BJ (cell line): ENCODE measurements at regions of chr1 and their contacts with region 1.

Region 1: DNA sequence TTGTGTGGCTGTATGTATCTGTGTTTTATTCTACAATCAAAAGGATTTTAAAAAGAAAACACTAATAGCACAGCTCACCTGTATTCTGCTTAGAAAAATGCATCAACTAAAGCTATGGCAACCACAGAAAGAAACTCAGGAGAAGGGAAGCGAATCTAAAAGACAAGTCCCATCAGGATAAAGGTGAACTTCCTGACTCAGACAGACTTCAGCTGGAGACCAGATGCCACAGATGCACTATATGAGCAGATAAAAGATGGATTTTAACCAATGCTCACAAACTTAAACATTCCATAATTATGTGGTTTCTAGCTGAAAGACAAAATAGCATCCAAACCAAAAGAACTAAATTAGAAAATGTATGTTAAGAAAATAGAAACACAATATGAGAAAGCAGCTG is 231.0 kb downstream of the RERE start:
- DNase-seq: no peak
- H3K4me3 ChIP-seq: no peak overlapping the region
- H3K27me3 ChIP-seq: no peaks in the 10 kb centered on the region
- CTCF ChIP-seq: no peak

Region 2: DNA sequence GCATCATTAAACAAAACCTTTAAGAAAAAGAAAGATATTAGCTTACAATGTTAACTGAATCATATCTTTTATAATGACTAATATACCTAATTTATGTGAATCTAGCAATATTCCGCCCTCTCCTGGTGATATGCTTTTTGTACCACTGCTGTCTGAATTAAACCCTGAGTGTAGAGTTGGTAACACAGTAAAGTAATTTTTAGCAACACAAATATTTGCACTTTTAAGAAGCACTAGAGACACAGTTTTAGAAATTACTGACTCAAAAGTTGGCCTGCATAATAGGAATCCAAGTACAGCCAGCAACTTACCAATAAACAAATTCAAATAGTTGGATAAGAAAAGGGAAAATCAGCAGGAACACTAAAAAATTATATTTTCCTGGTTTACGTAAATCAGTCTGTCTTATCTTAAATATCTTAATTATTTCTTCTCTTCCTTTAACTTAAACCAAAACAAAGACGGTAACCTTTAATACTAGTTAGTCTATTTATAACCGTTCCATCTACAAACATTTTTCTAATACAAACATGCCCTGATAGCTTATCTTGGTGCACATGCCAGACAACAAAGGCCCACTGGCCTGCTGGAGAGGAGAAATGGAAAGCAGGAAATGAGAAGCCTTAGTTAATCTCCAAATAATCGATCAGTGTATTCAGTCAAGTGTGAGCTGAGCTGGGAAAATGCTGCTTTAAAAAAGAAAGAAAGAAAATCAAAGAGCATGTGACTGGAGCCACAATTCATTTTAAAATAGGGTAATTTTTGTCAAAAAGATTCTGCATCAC is 15.0 kb before region 1 on chr1:
- CTCF ChIA-PET with region 1: no interaction called
- POLR2A ChIA-PET with region 1: no interaction called
- DNase-seq: no peak
- H3K4me3 ChIP-seq: no peak overlapping the region
- H3K27me3 ChIP-seq: no peaks in the 10 kb centered on the region
- CTCF ChIP-seq: peak; percentile 42

Region 3: DNA sequence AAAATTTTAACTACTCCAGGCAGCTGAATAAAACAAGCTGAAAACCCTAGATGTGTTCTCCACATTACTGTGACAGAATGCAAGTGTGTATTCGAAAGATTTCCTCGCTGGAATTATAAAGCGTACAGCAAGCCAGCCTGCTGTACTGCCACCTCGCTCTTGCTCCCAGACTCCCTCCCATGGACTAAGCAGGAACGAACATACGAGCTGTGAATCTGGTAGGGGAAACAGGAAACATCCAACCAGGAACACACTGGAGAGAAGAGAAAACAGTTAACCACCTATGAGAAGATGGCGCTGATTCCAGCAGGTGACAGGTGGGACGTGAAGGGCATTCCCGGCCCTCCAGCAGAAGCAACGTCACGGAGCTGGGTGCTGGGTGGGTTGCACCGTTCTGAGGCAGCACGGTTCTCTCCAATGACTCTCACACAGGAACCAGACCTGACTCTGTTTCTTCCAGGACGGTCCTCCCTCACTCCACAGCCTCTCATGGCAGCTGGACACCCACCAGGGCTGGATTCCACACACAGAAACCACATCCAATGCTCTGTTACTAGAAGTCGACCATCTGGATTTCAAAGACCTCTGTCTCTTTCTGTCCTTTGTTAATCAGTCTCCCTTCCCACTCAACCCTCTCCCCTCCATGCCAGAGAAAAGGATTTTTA is 11.8 kb after region 1 on chr1:
- CTCF ChIA-PET with region 1: interaction called, 32 read pairs
- POLR2A ChIA-PET with region 1: interaction called, 3 read pairs
- DNase-seq: no peak
- H3K4me3 ChIP-seq: no peak overlapping the region
- H3K27me3 ChIP-seq: no peaks in the 10 kb centered on the region
- CTCF ChIP-seq: peak; percentile 62

Region 4: DNA sequence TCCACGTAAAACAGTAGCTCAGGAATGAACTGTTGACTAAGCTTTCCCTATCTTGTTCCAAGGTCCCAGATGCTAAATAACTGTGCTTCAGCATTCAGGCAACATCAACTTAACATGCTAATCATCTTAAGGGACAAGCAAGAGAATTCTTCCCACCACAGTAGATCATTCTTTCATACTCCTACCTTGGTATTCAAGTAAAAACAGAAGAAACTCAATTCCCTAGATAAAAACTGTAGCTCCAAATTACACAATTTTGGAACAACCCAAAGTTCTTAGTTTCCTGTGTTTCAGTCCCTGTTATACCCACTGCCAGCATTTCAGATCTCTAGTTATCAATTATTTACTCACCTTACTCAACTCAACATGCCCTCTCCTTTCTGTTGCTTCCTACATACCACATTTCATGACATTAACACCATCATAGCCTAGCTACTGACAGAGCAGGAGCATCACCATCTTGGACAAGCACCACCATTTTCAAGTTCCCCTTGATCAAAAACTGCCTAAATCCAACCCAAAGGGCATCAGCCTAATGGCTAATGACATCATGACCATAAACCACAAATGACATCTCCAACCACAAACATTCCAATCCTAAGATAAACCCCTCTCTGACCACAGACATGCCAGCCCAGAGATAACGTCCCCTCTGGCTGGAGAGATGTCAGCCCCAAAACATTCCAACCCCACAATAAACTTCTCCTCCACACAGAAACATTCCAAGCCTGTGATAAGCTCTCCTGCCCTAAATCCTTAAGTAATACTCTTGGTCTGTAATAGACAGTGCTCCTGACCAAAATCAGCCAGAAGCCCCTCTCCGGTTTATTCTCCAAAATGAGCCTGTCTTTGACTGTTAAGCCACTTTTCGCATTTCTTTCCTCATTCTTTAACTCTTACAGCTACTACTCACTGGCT is 39.8 kb after region 1 on chr1:
- CTCF ChIA-PET with region 1: no interaction called
- POLR2A ChIA-PET with region 1: no interaction called
- DNase-seq: peak; percentile 79
- H3K4me3 ChIP-seq: no peak overlapping the region
- H3K27me3 ChIP-seq: no peaks in the 10 kb centered on the region
- CTCF ChIP-seq: no peak